GM12878 (cell line): ENCODE measurements at regions of chrX and their contacts with region 1.

Region 1: GRCh38 chrX:82218361-82218760 is 1016.5 kb downstream of the SH3BGRL start:
- DNase-seq: peak; percentile 1
- ATAC-seq: peak; percentile 82
- H3K4me3 ChIP-seq: no peak overlapping the region
- H3K27ac ChIP-seq: no peak overlapping the region
- H3K4me1 ChIP-seq: no peaks in the 10 kb centered on the region
- H3K27me3 ChIP-seq: no peaks in the 10 kb centered on the region
- CTCF ChIP-seq: peak in 2 of 3 experiments; percentile 30 to 37; a peak in 3 of 6 replicates
- EP300 ChIP-seq: no peak
- POLR2A ChIP-seq: no peak
- RAD21 ChIP-seq: peak; percentile 55

Region 2: DNA sequence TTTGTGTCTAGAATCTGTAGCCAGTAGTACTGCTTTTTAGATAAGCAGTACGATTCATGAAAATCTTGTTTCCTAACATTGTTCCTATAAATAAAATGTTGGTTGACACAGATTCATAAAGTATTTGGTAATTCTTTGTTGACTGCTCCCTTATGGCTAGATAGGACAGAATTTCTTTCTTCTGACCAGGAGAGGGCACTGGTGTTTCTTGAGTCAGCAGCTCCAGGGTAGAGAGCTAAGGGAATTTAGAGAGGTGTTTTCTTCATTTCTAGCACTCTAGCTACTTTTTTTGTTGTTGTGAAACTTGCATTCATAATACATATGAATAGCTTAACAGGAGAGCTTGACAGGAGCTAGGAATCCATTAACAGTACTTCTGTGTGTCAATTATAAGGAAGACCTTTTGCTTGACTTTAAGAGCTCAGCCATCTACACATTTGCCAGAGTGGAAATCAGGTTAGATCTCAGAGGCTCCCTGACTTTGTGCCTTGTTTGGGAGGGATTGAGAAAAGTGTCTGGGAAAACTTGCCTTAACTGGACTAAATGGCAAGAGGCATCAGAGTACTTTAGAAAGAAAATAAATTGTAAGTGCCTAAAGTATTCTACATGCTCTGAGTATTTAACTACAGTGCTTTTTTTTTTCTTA is 260.3 kb before region 1 on chrX:
- CTCF ChIA-PET with region 1: interaction called, 3 read pairs
- POLR2A ChIA-PET with region 1: no interaction called
- RAD21 ChIA-PET with region 1: interaction called, 3 read pairs
- SMC1A ChIA-PET with region 1: interaction called, 3 read pairs
- in situ Hi-C with region 1: no loop called
- intact Hi-C with region 1: loop called (anchors 2 kb)
- DNase-seq: no peak
- ATAC-seq: peak; percentile 84
- H3K4me3 ChIP-seq: no peak overlapping the region
- H3K27ac ChIP-seq: no peak overlapping the region
- H3K4me1 ChIP-seq: no peaks in the 10 kb centered on the region
- H3K27me3 ChIP-seq: no peaks in the 10 kb centered on the region
- CTCF ChIP-seq: peak; percentile 39 to 49 (median 40); a peak in 5 of 6 replicates
- EP300 ChIP-seq: no peak
- POLR2A ChIP-seq: no peak
- RAD21 ChIP-seq: peak; percentile 49

Region 3: DNA sequence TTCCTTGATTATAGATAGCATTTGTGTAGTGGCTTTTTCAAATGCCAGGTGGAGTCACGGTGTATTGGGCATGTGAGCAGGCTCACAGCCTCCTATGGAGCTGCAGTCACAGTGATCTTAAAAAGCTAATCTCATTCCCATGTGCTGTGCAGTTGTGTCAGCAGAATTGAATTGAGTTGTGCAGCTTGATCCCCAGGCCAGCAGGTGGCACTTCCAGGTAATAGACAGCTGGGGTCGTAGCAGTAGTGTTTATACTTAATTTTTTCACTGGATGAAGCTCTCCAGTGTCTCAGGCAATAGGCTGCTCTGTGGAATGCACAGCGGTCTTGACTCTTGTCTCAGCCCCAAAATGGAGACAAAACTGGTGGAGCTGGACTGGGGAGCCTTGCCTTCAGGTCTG is 11.6 kb after region 1 on chrX:
- CTCF ChIA-PET with region 1: interaction called, 13 read pairs
- POLR2A ChIA-PET with region 1: no interaction called
- RAD21 ChIA-PET with region 1: no interaction called
- SMC1A ChIA-PET with region 1: interaction called, 4 read pairs
- in situ Hi-C with region 1: no loop called
- intact Hi-C with region 1: no loop called
- DNase-seq: no peak
- ATAC-seq: no peak
- H3K4me3 ChIP-seq: no peak overlapping the region
- H3K27ac ChIP-seq: no peak overlapping the region
- H3K4me1 ChIP-seq: no peaks in the 10 kb centered on the region
- H3K27me3 ChIP-seq: no peaks in the 10 kb centered on the region
- CTCF ChIP-seq: no peak
- EP300 ChIP-seq: no peak
- POLR2A ChIP-seq: no peak
- RAD21 ChIP-seq: no peak

Region 4: GRCh38 chrX:82676386-82676785 is 458.0 kb after region 1 on chrX:
- CTCF ChIA-PET with region 1: interaction called, 42 read pairs
- POLR2A ChIA-PET with region 1: no interaction called
- RAD21 ChIA-PET with region 1: interaction called, 20 read pairs
- SMC1A ChIA-PET with region 1: interaction called, 11 read pairs
- in situ Hi-C with region 1: no loop called
- intact Hi-C with region 1: loop called (anchors 1 kb)
- DNase-seq: no peak
- ATAC-seq: peak; percentile 38; the same call in 2 of the 3 replicates
- H3K4me3 ChIP-seq: no peak overlapping the region
- H3K27ac ChIP-seq: no peak overlapping the region
- H3K4me1 ChIP-seq: no peaks in the 10 kb centered on the region
- H3K27me3 ChIP-seq: no peaks in the 10 kb centered on the region
- CTCF ChIP-seq: peak in 1 of 3 experiments; percentile 21; a peak in 2 of 6 replicates
- EP300 ChIP-seq: no peak
- POLR2A ChIP-seq: no peak
- RAD21 ChIP-seq: peak; percentile 25; the same call in 1 of the 2 replicates

Region 5: DNA sequence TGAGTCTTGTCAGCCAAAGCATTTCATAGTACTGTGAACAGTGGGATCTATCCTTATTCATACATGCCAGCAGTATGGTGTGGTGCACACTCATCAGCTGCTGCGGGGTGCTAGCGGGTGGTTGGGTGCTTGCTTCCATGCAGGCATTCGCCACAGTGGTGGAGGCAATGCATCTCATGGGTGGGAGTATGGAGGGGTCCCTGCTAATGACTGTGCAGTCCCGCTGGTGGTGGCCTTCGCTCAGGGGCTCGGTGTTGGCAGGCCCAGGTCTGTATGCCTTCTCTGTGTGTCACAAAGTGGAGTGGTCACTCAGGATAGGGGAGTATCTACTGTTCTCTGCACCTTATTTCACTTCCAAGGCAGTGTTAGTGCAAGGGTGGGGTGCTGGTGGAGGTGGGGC is 1412.3 kb after region 1 on chrX:
- CTCF ChIA-PET with region 1: interaction called, 9 read pairs
- POLR2A ChIA-PET with region 1: no interaction called
- RAD21 ChIA-PET with region 1: interaction called, 11 read pairs
- SMC1A ChIA-PET with region 1: interaction called, 8 read pairs
- in situ Hi-C with region 1: no loop called
- intact Hi-C with region 1: loop called (anchors 5 kb)
- DNase-seq: no peak
- ATAC-seq: no peak
- H3K4me3 ChIP-seq: no peak overlapping the region
- H3K27ac ChIP-seq: no peak overlapping the region
- H3K4me1 ChIP-seq: no peaks in the 10 kb centered on the region
- H3K27me3 ChIP-seq: no peaks in the 10 kb centered on the region
- CTCF ChIP-seq: no peak
- EP300 ChIP-seq: no peak
- POLR2A ChIP-seq: no peak
- RAD21 ChIP-seq: no peak